Adrenal gland (tissue), 19 donors: ENCODE measurements at regions of chr6 and their contacts with region 1.

Region 1: DNA sequence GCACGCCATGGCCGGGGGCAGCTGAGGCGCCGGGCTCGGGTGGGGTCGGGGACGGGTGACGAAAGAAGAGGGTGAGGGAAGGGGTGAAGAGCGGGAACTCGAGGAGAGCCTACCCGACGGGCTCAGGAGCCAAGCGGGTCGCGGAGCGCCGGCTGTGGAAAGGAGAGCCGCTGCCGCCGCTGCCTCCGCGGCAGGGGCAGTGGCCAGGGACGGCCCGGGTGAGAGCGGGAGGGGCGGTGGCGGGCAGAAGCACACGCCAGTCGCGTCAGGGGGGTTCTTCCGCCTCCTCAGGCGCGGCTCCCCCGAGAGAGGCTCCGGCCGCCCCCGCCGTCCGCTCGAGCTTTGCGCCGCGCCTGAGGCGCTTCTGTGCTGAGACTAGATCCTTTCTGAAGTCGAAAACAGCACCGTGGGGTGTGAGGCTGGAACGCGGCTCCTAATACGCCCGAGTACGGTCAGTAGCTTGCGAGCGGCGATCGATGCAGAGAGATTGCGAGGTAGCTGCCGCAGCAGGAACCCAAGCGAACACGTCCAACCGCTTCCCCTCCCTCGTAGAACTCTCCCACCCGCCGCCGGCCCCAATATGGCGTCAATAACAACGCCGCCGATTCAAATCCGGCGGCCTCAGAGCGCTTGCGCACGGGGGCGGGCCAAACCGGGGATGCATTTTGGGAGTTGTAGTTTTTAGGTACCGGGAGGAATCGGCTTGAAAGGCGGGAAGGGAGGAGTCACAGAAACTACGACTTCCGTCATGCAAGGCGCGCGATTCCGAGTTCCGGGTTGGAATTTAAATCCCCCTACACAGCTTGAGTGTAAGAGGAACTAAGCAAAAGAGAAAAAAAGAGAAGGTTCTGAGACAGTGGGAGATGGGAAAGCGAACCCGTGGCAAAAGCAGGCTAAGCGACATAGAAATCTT is at the start of gene AKIRIN2:
- DNase-seq: peak; percentile 97 to 99 (median 98)
- H3K4me3 ChIP-seq: peak within 1 kb of the TSS; percentile 69 to 84 (median 80)
- H3K27ac ChIP-seq: peak within 1 kb of the TSS; percentile 93 to 99 (median 97)
- H3K4me1 ChIP-seq: peaks cover 21 to 30% of the 10 kb centered on the region in 2 donors
- H3K27me3 ChIP-seq: no peaks in the 10 kb centered on the region
- CTCF ChIP-seq: no peak
- POLR2A ChIP-seq: peak; percentile 89 to 98
- total RNA-seq, gene AKIRIN2: 20.6 to 70.2 (median 53.5) TPM

Region 2: DNA sequence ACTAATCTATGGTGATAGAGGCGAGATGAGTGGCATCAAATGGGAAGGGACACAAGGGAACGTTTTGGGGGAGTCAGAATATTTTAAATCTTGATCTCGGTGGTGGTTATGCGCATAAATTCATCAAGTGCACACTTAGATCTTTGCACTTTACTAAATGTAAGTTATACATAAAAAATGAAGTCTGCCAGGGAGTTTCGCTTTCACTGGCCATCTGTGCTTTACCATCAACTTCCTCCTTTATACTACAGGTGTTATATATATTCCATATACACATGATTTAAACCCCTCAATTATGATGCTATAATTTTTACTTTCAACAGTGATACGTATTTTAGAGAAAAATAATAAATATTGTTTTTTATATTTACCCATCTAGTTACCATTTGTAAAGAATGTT is 97.7 kb after region 1 on chr6:
- intact Hi-C with region 1: loop called in 1 of 2 experiments (anchors 10 kb)
- DNase-seq: no peak
- H3K4me3 ChIP-seq: no peak overlapping the region
- H3K27ac ChIP-seq: no peak overlapping the region
- H3K4me1 ChIP-seq: peaks cover 0 to 2% of the 10 kb centered on the region in 2 donors
- H3K27me3 ChIP-seq: no peaks in the 10 kb centered on the region
- CTCF ChIP-seq: no peak
- POLR2A ChIP-seq: no peak